AG04449 (cell line): ENCODE measurements at regions of chr7 and their contacts with region 1.

Region 1: GRCh38 chr7:155344600-155345433 is 47.1 kb downstream of the INSIG1 start:
- DNase-seq: no peak
- H3K4me3 ChIP-seq: peak overlapping the region; percentile 44
- CTCF ChIP-seq: peak; percentile 73

Region 2: DNA sequence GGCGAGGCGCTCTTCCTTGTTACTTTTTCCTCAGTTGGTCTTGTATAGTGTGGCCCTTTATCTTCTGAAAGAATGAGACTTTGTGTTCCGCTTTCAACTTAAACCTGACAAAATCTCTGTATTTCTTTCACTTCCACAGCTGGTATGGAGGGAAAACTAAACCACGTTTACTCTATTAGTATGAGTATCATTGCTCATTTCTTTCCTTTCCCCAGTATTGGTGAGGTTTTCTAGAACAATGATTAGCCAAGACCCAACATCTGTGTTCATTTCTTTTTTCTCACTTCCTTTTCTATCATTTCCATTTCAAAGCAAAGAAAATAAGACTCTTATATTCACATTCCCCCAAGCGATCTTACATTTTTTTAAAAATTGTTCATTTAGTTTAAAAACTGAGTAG is 507.2 kb before region 1 on chr7:
- CTCF ChIA-PET with region 1: no interaction called
- POLR2A ChIA-PET with region 1: no interaction called
- DNase-seq: no peak
- H3K4me3 ChIP-seq: no peak overlapping the region
- CTCF ChIP-seq: no peak

Region 3: GRCh38 chr7:154913638-154914312 is 431.0 kb before region 1 on chr7:
- CTCF ChIA-PET with region 1: interaction called, 22 read pairs
- POLR2A ChIA-PET with region 1: no interaction called
- DNase-seq: no peak
- H3K4me3 ChIP-seq: peak overlapping the region; percentile 32
- CTCF ChIP-seq: peak; percentile 92

Region 4: DNA sequence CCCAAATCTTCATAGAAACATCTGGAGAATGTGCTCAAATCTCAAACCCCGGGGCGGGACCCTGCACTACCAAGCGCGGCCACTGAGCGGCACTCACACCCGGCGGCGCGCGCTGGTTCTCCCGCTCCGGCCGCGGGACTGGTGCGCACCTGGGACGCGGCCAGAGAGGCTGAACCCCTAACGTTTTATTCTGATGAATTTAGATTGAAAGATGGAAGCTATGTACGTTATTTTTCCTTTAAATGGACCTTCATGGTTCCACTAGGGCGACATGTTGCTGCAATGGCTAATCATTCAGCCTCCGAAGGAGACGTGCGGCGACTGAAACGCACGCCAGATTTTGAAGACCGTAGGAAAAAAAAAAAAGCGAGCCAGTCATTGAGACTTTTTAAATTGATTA is 154.1 kb before region 1 on chr7:
- CTCF ChIA-PET with region 1: interaction called, 122 read pairs
- POLR2A ChIA-PET with region 1: no interaction called
- DNase-seq: no peak
- H3K4me3 ChIP-seq: peak overlapping the region; percentile 43
- CTCF ChIP-seq: peak; percentile 94

Region 5: DNA sequence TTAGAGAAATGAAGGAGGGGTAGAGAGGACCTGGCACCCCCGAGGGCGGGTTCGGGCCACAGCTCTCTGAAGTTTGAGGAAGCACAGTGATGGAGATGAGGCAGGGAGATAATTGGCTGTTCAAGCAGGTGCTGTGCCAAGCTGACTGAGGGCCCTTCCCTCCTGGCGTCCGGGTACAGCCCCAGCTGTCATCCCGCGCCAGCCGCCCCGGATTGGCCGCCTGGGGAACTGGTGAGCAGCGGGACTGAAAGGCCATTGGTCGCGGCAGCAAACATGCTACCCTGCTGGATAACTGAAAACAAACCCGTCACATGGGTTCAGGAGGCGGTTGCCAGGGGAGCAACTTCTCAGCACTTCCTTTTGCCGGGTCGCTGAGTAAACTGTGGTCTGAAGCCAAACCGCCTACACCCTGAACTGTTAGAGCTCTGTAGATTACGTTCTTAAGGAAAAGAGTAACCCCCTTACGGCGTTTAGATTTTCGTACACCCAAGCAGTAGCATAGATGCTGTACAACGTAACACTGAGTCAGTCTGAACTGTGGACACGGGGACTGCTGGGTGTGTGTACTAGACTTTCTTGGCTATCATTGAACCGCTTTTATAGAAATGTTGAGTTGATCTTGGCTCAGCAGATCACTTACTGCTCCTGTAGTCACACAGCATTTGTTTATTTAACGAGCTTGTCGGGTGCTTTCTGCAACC is 45.8 kb before region 1 on chr7:
- CTCF ChIA-PET with region 1: interaction called, 15 read pairs
- POLR2A ChIA-PET with region 1: no interaction called
- DNase-seq: peak; percentile 72
- H3K4me3 ChIP-seq: peak overlapping the region; percentile 73
- CTCF ChIP-seq: no peak

Region 6: GRCh38 chr7:155312633-155313032 is 32.2 kb before region 1 on chr7:
- CTCF ChIA-PET with region 1: interaction called, 17 read pairs
- POLR2A ChIA-PET with region 1: no interaction called
- DNase-seq: no peak
- H3K4me3 ChIP-seq: no peak overlapping the region
- CTCF ChIP-seq: no peak

Region 7: DNA sequence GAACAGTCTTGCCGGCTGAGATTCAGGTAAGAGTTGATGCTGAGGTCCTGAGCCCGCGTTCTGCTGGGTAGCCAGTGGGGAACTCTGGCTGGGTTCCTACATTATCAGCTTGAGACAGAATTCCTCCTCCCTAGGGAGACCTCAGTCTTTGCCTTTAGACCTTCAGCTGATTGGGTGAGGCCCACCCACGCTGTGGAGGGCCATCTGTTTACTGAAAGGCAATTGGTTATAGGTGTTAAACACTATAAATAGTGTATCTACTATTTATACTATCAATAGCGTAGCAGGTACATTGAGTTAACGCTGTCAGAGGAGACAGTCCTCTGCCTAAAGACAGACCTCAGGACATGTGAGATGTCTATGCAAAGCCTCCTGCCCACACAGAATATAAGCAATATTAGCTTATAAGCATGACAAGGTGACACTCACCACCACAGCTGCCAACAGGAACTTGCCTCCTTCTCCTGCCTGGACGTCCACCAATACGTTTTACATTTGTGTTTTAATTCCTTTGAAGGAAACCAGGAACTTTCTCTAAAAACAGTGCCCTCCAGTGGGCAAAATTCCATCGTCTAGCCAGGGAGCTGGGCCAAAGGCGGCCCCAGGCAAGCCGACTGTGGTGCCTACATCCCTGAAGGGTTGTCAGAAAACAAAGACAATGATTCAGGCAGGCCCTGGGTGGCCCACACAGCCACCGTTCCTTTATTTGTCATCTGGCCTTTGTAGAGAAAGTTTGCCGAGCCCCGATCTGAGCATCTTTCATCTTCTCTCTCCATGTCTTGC is 11.7 kb after region 1 on chr7:
- CTCF ChIA-PET with region 1: interaction called, 24 read pairs
- POLR2A ChIA-PET with region 1: no interaction called
- DNase-seq: no peak
- H3K4me3 ChIP-seq: no peak overlapping the region
- CTCF ChIP-seq: peak; percentile 28

Region 8: DNA sequence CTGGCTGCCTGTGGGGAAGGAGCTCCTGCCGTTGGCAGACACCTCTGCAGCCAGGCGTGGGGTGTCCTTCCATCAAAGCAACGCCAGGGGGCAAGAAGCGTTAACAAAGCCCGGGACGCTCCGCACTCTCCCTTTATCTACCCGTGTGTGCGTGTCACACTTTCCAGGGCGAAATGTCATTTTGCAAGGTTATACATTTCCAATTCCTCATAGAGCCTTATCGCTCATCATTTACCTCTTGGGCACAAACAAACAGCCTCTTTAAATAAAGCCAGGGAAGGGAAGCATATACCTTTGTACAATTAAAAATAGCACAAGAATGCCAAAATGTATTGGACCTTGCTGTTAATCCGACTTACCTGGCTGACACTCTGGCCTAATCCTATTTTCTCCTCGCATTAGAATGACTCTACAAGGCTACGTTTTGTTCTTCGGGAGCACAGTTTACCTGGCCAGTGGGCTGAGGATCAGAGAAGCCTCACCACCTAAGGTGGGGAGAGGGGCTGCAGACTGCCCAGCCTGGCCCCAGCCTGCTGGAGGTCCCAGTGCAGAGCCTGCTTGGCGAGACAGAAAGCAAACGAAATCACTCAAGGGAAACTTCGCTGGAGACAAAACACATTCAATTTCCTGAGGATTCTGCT is 35.5 kb after region 1 on chr7:
- CTCF ChIA-PET with region 1: interaction called, 17 read pairs
- POLR2A ChIA-PET with region 1: no interaction called
- DNase-seq: no peak
- H3K4me3 ChIP-seq: no peak overlapping the region
- CTCF ChIP-seq: peak; percentile 81